Activated CD4-positive, alpha-beta T cell treated with anti-CD3 and anti-CD28 coated beads for 36 hours (primary cell): ENCODE measurements at regions of chr7 and their contacts with region 1.

Region 1: GRCh38 chr7:102834999-102835398 is 77.8 kb upstream of the LRRC17 start:
- DNase-seq: peak; percentile 34
- ATAC-seq: peak; percentile 95
- H3K4me3 Mint-ChIP-seq: no peak overlapping the region
- H3K27ac Mint-ChIP-seq: no peak overlapping the region
- H3K4me1 Mint-ChIP-seq: peaks cover 8% of the 10 kb centered on the region
- H3K27me3 Mint-ChIP-seq: no peaks in the 10 kb centered on the region

Region 2: DNA sequence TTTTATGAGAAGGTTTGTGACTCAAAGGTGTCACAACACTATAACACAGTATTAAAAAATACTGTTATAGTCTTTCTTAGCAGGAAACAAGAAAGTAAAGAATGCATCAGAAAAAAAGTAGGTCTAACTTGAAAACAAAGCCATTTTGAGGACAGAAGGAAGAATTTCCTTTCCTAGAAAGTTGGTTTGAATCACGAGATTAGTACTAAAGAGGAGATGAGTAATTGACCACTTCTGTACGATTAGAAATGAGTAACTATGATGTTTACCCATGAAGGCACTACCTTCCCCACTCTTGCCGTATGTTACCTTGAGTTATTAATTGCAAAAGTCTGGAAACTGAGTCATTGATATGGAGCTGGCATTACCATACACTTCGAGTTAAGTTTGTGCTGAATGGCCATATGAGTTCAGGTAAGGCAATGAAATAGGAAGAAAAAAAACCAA is 21.0 kb before region 1 on chr7:
- CTCF ChIA-PET with region 1: interaction called, 4 read pairs
- POLR2A ChIA-PET with region 1: no interaction called
- intact Hi-C with region 1: loop called (anchors 1 kb)
- DNase-seq: no peak
- ATAC-seq: peak; percentile 95
- H3K4me3 Mint-ChIP-seq: no peak overlapping the region
- H3K27ac Mint-ChIP-seq: peak overlapping the region; percentile 31
- H3K4me1 Mint-ChIP-seq: peaks cover 12% of the 10 kb centered on the region
- H3K27me3 Mint-ChIP-seq: no peaks in the 10 kb centered on the region

Region 3: GRCh38 chr7:102991540-102992214 is 156.7 kb after region 1 on chr7:
- CTCF ChIA-PET with region 1: no interaction called
- POLR2A ChIA-PET with region 1: no interaction called
- intact Hi-C with region 1: loop called in 1 of 2 experiments (anchors 1 kb)
- DNase-seq: peak; percentile 30
- ATAC-seq: peak; percentile 91
- H3K4me3 Mint-ChIP-seq: no peak overlapping the region
- H3K27ac Mint-ChIP-seq: no peak overlapping the region
- H3K4me1 Mint-ChIP-seq: no peaks in the 10 kb centered on the region
- H3K27me3 Mint-ChIP-seq: no peaks in the 10 kb centered on the region